Right ventricle myocardium inferior (tissue), 1 donor: ENCODE measurements at regions of chr19 and their contacts with region 1.

Region 1: DNA sequence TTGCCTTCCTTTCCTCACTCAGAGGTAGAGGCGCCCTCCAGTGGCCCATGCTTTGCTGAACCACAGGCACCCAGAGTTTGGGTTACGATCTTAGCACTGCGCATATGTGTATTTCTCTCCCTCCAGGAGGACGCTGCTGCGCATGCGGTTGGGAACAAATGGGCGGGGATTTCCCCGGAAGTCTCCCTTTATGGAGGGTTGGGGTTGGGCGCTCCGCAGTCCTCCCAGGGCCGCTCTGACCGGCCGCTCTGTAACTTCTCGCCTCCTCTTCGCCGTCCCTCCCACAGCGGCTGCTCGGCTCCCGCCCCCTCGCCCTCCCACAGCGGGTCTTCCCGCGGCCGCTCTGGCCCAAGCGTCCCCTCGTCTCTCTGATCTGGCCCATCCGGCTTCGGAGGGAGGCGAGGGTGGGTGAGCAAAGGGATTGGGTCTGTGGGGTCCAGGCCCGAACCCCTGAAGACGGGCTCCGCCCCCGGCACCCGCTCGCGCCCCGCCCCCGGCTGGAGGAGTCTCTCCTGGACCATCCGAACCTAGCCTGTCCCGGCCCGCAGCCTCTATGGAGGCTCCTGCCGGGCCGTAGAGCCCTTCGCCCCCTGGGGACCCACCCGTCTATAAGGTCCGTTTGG is at the start of gene MEGF8:
- DNase-seq: peak; percentile 96
- ATAC-seq: peak; percentile 98
- total RNA-seq, gene MEGF8: 32.6 TPM

Region 2: DNA sequence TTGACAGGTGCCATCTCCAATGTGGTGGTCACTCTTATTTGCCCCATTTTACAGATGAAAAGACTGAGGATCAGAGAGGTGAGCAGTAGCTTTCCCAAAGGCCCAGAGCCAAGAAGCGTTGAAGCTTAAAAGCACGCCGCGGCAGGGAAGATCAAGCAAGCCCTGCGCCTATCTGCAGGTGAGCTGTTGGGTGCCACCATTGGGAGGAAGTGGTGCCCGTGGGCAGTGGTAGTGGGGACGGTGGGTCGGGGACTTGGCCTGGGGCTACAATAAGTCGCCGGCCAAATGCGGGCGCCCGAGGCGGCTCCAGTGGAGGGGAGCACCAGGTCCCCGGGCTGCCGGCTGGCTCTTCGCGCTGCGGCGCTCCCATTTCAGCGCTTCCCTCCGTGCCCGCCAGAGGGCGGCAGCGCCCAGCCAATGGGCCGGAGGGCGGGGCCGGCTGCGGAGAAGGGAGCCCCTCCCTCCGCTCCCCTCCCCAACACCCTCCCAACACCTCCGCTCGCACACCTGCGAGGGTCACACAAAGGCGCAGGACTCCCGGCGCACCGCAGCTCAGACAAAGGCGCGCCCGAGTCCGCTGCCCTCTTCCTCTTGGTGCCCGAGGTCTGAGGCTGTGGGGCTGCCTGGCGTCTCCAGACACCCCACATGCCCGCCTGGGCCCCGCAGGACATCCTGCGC is 192.4 kb before region 1 on chr19:
- intact Hi-C with region 1: loop called (anchors 10 kb)
- DNase-seq: peak; percentile 90
- ATAC-seq: peak; percentile 65

Region 3: DNA sequence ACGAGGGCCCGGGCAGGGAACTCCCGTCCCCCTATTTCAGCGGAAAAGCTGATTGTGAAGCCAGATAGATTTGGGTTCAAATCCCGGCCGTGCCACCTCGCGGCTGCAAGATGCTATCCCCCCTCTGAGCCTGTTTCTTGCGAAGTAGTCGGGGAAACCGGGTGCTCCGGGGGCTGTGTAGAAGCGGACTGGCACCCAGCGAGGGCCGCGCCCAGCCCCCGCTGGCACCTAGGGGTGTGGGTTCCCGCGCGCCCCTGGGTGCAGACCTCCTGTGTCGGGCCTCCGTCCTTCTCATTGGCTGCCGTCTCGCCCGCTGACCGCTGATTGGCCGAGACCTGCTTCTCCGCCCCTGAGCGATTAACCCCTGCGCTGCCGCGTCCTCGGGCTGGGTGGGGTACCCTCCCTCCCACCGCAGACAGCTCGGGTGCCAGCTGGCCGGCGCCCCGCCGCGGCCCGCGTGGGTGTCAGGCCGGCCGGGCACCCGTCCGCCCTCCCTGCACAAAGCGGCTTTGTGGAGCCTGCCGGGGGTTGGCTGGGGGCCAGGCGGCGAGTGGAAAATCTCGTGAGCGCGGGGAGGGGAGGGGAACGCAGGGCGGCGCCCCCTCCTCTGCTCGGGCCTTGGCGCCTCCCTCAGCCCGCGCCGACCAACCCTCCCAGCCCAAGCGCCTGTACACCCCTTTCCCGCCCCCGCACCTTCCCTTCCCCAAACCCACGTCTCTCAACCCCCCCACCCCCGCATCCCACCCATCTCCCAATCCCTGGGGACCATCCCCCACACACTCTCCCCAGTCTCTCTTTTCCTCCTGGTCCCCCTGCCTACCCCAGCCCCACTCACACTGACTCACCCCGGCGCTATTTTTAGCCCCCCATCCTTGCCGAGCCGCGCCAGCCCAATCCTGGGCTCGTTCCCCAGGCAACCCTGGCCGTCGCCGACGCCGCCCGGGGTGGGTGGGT is 44.9 kb before region 1 on chr19:
- intact Hi-C with region 1: no loop called
- DNase-seq: peak; percentile 95
- ATAC-seq: peak; percentile 71

Region 4: GRCh38 chr19:42301656-42302203 is 23.7 kb before region 1 on chr19 and contains the start of gene PRR19:
- intact Hi-C with region 1: loop called (anchors 1 kb)
- DNase-seq: no peak
- ATAC-seq: peak; percentile 9
- total RNA-seq, gene PRR19: 0.51 TPM

Region 5: DNA sequence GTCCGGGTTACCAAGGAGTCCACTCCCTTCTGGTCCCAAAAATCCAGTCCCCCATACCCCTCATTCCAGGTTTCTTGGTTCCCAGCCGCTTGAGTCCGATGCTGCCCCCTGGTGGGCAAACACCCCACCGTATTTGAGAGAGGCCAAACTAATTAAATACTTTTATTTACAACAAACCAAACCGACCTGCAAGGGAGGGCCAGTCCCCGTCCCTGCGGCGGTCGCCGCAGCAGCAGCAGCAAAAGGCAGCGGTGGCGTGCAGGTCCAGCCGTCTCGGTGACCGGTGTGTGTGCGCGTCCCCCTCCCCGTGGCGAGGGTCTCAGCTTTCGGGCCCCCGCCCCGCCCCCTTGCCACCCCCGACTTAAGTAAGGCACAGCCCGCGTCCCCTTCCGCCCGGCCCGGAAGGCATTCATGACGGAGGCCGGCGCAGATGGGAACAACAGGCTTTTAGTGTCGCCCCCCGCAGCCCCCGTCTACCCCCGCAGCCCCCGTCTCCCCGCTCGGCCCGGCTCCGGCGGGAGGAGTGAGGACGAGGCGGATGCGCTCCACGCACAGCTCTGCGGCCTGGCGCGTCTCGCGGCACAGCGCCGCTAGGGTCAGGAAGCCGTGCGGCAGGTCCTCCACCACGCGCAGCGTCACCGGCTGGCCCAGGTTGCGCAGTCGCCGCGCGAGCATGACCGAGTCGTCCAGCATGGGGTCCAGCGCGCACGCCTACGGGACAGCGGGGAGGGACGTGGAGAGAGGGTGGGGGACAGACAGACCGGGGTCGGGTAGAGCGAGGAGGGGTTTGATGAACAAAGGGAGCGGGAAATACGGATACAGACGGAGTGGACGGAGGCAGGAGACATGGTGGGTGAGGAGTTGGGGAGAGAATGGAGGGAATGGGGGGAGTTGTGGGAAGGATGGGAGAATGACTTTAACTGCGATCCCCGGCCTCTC is 76.2 kb after region 1 on chr19:
- intact Hi-C with region 1: loop called (anchors 2 kb)
- DNase-seq: peak; percentile 90
- ATAC-seq: peak; percentile 68